ENCODE measurements at regions of chr15 and their contacts with region 1.

Region 1: GRCh38 chr15:43903864-43904290 is 77.1 kb downstream of the WDR76 start:
- DNase-seq: peak in 2 of 4 donors; percentile 31 to 58
- ATAC-seq: peak; percentile 90
- H3K4me3 ChIP-seq: no peak overlapping the region
- H3K27ac ChIP-seq: no peak overlapping the region
- H3K4me1 ChIP-seq: no peaks in the 10 kb centered on the region
- H3K27me3 ChIP-seq: no peaks in the 10 kb centered on the region
- CTCF ChIP-seq: peak; percentile 59 to 77

Region 2: DNA sequence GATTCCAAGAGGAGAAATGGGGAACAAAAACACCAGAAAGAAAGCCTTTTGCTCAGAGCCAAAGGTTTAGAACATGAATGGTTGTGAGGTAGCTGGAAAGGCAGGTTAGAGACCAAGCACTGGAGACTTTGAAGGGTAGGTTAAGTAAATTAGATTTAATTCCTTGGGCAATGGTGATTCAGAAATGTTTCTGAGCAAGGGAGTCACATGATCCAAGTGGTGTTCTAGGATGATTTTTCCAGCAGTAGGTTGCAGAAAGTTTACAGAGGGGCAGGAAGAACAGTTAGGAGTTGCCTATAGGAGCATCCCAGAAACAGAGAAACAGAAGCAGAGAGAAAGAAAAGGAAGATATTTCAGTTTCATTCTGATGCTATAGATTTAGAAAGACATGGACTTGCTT is 62.8 kb after region 1 on chr15:
- intact Hi-C with region 1: no loop called
- DNase-seq: no peak
- ATAC-seq: no peak
- H3K4me3 ChIP-seq: no peak overlapping the region
- H3K27ac ChIP-seq: no peak overlapping the region
- H3K4me1 ChIP-seq: no peaks in the 10 kb centered on the region
- H3K27me3 ChIP-seq: no peaks in the 10 kb centered on the region
- CTCF ChIP-seq: no peak

Region 3: GRCh38 chr15:44066316-44066740 is 162.5 kb after region 1 on chr15:
- intact Hi-C with region 1: loop called in 1 of 2 experiments (anchors 10 kb)
- DNase-seq: peak in 1 of 4 donors; percentile 44
- ATAC-seq: peak; percentile 88
- H3K4me3 ChIP-seq: no peak overlapping the region
- H3K27ac ChIP-seq: no peak overlapping the region
- H3K4me1 ChIP-seq: no peaks in the 10 kb centered on the region
- H3K27me3 ChIP-seq: no peaks in the 10 kb centered on the region
- CTCF ChIP-seq: peak; percentile 55 to 60

Region 4: GRCh38 chr15:45187894-45188830 is 1284.3 kb after region 1 on chr15 and contains the start of gene SHF:
- intact Hi-C with region 1: no loop called
- DNase-seq: peak in 3 of 4 donors; percentile 64 to 82 (median 64)
- ATAC-seq: peak; percentile 78
- H3K4me3 ChIP-seq: peak within 1 kb of the TSS; percentile 44 to 51
- H3K27ac ChIP-seq: peak within 1 kb of the TSS; percentile 41 to 56
- H3K4me1 ChIP-seq: peaks cover 14 to 23% of the 10 kb centered on the region in 2 donors
- H3K27me3 ChIP-seq: peaks cover 0 to 26% of the 10 kb centered on the region in 2 donors
- CTCF ChIP-seq: no peak
- polyA plus RNA-seq, gene SHF: 35.7 to 44.9 (median 39.8) TPM

Measured in left lung (tissue), 14 donors.